CD8-positive, alpha-beta T cell (primary cell): ENCODE measurements at regions of chr17 and their contacts with region 1.

Region 1: GRCh38 chr17:56715613-56716357 is 117.9 kb downstream of the C17orf67 start:
- DNase-seq: peak; percentile 47 to 83 (median 76)
- ATAC-seq: peak; percentile 84
- H3K4me3 ChIP-seq: no peak overlapping the region
- H3K4me3 Mint-ChIP-seq: no peak overlapping the region
- H3K27ac ChIP-seq: no peak overlapping the region
- H3K27ac Mint-ChIP-seq: no peak overlapping the region
- H3K4me1 ChIP-seq: no peaks in the 10 kb centered on the region
- H3K4me1 Mint-ChIP-seq: no peaks in the 10 kb centered on the region
- H3K27me3 ChIP-seq: no peaks in the 10 kb centered on the region
- H3K27me3 Mint-ChIP-seq: peaks cover 4% of the 10 kb centered on the region
- CTCF ChIP-seq: peak; percentile 75

Region 2: DNA sequence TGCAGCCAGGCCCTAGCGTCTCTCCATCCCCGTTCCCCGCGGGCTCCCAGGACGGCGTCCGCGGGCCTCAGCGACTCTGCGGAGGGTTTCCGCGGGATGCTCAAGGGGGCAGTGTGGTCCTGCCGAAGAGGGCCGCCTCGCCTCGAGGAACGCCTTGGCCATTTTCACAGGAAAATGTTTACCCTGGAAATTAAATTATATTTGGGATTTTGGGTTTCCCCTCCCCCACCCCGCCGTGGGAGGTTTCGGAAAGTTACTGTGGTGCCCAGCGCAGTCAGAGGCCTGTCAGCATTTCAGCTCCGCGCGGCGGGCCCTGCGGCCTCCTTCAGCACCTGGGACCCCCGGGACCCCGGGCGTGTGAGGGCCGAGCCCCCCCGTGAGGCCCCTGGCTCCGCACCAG is 870.4 kb before region 1 on chr17:
- CTCF ChIA-PET with region 1: no interaction called
- POLR2A ChIA-PET with region 1: no interaction called
- intact Hi-C with region 1: loop called in 1 of 2 experiments (anchors 5 kb)
- DNase-seq: peak in 6 of 9 experiments; percentile 1 to 51 (median 18)
- ATAC-seq: no peak
- H3K4me3 ChIP-seq: no peak overlapping the region
- H3K4me3 Mint-ChIP-seq: no peak overlapping the region
- H3K27ac ChIP-seq: no peak overlapping the region
- H3K27ac Mint-ChIP-seq: no peak overlapping the region
- H3K4me1 ChIP-seq: no peaks in the 10 kb centered on the region
- H3K4me1 Mint-ChIP-seq: no peaks in the 10 kb centered on the region
- H3K27me3 ChIP-seq: peaks cover 6 to 7% of the 10 kb centered on the region in 2 experiments
- H3K27me3 Mint-ChIP-seq: peaks cover 19% of the 10 kb centered on the region
- CTCF ChIP-seq: no peak

Region 3: GRCh38 chr17:56424543-56425044 is 291.2 kb before region 1 on chr17:
- CTCF ChIA-PET with region 1: no interaction called
- POLR2A ChIA-PET with region 1: no interaction called
- intact Hi-C with region 1: no loop called
- DNase-seq: peak in 1 of 9 experiments; percentile 38
- ATAC-seq: no peak
- H3K4me3 ChIP-seq: no peak overlapping the region
- H3K4me3 Mint-ChIP-seq: no peak overlapping the region
- H3K27ac ChIP-seq: no peak overlapping the region
- H3K27ac Mint-ChIP-seq: no peak overlapping the region
- H3K4me1 ChIP-seq: peaks cover 5% of the 10 kb centered on the region
- H3K4me1 Mint-ChIP-seq: peaks cover 13% of the 10 kb centered on the region
- H3K27me3 ChIP-seq: no peaks in the 10 kb centered on the region
- H3K27me3 Mint-ChIP-seq: peaks cover 3% of the 10 kb centered on the region
- CTCF ChIP-seq: no peak

Region 4: DNA sequence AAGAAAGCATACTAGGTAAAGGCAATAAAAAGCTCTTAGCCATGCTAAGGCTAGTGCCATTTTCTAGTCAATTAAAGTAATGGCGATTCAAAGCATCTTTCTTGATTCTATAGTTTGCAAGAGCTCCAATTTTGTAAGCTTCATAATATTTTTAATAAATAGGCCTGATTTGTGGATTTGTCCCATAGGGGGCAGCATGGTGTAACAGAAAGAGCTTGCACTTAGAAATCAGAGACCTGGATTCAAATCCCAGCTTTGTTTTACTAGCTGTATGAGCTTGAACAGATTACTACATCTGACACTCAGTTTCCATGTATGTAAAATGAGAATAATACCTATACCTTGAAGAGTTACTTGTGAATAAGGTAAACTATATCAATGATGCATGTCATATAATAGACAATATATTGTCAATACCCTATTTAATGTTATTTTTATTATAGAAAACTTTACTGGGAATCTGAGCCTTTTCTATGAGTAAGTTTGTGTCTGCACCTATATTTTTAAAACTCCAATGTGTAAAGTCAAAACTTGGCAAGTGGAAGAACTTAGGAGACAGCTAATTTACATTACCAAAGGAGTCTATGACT is 215.9 kb before region 1 on chr17:
- CTCF ChIA-PET with region 1: interaction called, 36 read pairs
- POLR2A ChIA-PET with region 1: no interaction called
- intact Hi-C with region 1: loop called (anchors 1 to 2 kb)
- DNase-seq: peak in 4 of 9 experiments; percentile 11 to 39 (median 15)
- ATAC-seq: no peak
- H3K4me3 ChIP-seq: no peak overlapping the region
- H3K4me3 Mint-ChIP-seq: no peak overlapping the region
- H3K27ac ChIP-seq: no peak overlapping the region
- H3K27ac Mint-ChIP-seq: no peak overlapping the region
- H3K4me1 ChIP-seq: no peaks in the 10 kb centered on the region
- H3K4me1 Mint-ChIP-seq: no peaks in the 10 kb centered on the region
- H3K27me3 ChIP-seq: no peaks in the 10 kb centered on the region
- H3K27me3 Mint-ChIP-seq: no peaks in the 10 kb centered on the region
- CTCF ChIP-seq: peak; percentile 39

Region 5: DNA sequence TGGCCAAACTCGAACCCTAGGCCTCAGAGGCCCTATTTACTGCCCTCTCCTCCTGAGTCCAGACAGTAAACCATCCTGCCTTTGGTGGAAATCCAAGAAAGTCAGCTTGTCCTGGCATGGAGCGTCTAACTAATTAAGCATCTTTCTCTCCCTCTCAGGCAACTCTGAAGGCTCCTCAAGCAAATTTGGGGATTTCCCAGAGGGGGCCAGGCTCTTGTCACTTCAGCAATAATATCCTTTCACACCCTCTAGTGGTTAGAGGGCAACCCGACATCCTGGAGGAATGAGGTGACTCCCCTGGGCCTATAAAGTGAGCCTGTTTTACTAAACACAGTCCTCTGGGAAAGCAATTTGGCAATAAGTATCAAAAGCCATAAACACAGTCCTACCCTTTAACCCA is 61.9 kb before region 1 on chr17:
- CTCF ChIA-PET with region 1: interaction called, 20 read pairs
- POLR2A ChIA-PET with region 1: no interaction called
- intact Hi-C with region 1: loop called (anchors 1 kb)
- DNase-seq: peak; percentile 17 to 86 (median 58)
- ATAC-seq: peak; percentile 99
- H3K4me3 ChIP-seq: no peak overlapping the region
- H3K4me3 Mint-ChIP-seq: no peak overlapping the region
- H3K27ac ChIP-seq: no peak overlapping the region
- H3K27ac Mint-ChIP-seq: peak overlapping the region; percentile 69
- H3K4me1 ChIP-seq: peaks cover 4% of the 10 kb centered on the region
- H3K4me1 Mint-ChIP-seq: peaks cover 6% of the 10 kb centered on the region
- H3K27me3 ChIP-seq: no peaks in the 10 kb centered on the region
- H3K27me3 Mint-ChIP-seq: peaks cover 11% of the 10 kb centered on the region
- CTCF ChIP-seq: peak; percentile 56

Region 6: DNA sequence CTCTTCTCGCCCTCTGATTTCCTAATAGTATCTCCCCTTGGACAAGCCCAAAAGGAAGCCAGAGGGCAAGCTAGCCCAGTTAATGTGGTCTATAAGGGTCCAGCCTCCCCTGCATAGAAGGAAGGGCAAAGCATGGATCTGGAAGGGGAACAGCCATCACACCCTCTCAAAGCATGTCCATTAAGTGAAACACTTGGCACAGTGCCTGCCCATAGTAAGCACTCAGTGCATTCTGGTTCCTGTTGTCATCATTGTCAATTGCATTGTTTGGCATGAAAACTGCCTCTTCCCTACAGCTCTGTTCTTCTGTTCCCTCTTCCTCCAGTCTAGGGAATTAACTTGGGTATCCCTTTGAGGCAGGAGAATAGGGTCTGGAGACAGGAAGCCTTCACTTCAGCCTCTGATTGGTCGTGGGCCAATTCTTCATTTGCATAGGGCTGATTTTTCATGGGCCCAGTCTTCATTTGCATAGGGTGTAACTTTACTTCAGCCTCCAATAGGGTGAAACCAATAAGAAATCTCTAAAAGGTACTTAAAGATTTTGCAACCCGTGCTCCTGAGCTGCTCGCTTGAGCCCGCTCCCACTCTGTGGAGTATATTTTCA is 36.6 kb after region 1 on chr17:
- CTCF ChIA-PET with region 1: interaction called, 11 read pairs
- POLR2A ChIA-PET with region 1: no interaction called
- intact Hi-C with region 1: no loop called
- DNase-seq: no peak
- ATAC-seq: no peak
- H3K4me3 ChIP-seq: no peak overlapping the region
- H3K4me3 Mint-ChIP-seq: no peak overlapping the region
- H3K27ac ChIP-seq: no peak overlapping the region
- H3K27ac Mint-ChIP-seq: no peak overlapping the region
- H3K4me1 ChIP-seq: peaks cover 10% of the 10 kb centered on the region
- H3K4me1 Mint-ChIP-seq: peaks cover 24% of the 10 kb centered on the region
- H3K27me3 ChIP-seq: no peaks in the 10 kb centered on the region
- H3K27me3 Mint-ChIP-seq: no peaks in the 10 kb centered on the region
- CTCF ChIP-seq: no peak

Region 7: DNA sequence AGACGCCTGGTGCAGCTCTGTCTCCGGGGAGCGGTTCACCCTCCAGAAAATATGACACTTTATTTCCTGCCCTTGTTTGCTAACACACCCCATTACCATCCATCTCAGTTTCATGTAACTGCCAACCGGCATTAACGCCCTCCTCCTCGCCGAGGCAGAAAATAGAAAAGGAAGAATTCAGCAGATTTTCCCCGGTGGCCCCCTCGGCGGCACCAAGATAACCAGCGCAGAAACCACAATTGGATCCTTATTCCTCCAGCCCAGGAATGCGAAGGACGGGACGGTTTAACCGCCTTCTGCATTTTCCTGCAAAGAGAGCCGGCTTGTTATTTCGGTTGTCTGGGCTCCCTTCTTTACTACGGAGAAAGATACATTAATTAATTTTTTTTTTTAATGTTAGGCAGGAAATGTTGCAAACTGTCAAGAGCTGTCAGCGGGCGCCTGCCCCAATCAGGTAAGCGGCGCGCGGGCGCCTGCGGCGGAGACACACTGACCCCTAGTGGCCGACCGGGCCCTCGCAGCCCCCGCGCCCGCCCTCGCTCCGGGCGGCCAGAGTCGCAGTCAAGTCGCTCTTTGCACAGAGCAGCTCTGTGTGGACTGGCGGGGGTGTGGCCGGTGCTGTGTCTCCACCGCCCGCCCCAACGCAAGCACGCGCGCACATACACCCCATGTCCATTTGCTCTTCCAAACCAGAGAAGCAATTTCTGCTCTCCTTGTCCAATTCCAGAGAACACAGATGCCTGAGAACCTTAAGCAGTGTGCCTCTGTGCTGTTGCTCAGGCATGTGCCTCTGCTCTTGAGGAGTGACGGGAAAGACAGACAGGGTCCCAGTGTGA is 64.3 kb after region 1 on chr17:
- CTCF ChIA-PET with region 1: interaction called, 39 read pairs
- POLR2A ChIA-PET with region 1: interaction called, 4 read pairs
- intact Hi-C with region 1: loop called (anchors 1 kb)
- DNase-seq: peak; percentile 77 to 93 (median 84)
- ATAC-seq: peak; percentile 97
- H3K4me3 ChIP-seq: peak overlapping the region; percentile 44 to 61
- H3K4me3 Mint-ChIP-seq: peak overlapping the region; percentile 93
- H3K27ac ChIP-seq: peak overlapping the region; percentile 63 to 71
- H3K27ac Mint-ChIP-seq: peak overlapping the region; percentile 95
- H3K4me1 ChIP-seq: peaks cover 14% of the 10 kb centered on the region
- H3K4me1 Mint-ChIP-seq: peaks cover 18% of the 10 kb centered on the region
- H3K27me3 ChIP-seq: no peaks in the 10 kb centered on the region
- H3K27me3 Mint-ChIP-seq: no peaks in the 10 kb centered on the region
- CTCF ChIP-seq: peak; percentile 99